CD4-positive, alpha-beta T cell (primary cell): ENCODE measurements at regions of chr2 and their contacts with region 1.

Region 1: DNA sequence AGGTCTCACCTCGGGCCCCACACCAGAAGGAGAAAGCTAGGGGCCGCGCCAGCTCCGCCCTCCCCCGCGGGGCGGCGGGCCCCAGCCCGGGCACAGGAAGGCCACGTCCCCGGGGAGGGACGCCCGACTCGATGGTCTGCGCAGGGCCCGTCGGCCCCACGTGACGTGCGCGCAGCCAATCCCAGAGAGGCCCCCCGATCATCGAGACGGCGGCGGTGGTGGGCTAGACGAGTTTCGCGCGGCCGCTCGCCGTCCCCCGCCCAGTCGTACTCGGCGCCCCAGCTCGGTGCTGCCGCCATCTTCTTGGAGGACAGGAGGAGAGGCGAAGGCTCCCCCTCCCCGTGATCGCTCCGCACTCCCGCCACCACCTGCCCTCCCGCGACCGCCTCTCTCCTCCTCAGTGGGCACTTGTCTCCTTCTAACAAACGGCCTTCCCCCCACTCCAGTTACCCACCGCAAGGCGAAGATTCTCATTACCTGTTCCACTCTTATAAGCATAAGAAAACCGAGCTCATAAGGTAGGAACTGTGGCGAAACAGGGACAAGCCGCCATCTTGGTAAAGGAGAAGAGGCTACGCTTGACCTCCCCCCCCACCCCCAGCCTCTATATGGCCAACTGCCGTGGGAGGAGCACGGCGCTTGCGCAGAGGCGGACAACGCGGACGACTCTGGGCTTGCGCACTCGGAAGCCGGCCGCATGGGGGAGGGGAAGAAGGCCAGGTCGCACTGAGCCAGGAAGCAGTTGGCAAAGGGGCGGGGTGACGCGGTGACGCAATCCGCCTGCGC is at the start of gene HDLBP:
- DNase-seq: peak; percentile 100
- ATAC-seq: peak; percentile 71
- H3K4me3 ChIP-seq: peak within 1 kb of the TSS; percentile 88
- H3K4me3 Mint-ChIP-seq: peak within 1 kb of the TSS; percentile 98
- H3K27ac ChIP-seq: peak within 1 kb of the TSS; percentile 96 to 98
- H3K27ac Mint-ChIP-seq: peak within 1 kb of the TSS; percentile 97
- H3K4me1 ChIP-seq: peaks cover 58% of the 10 kb centered on the region
- H3K4me1 Mint-ChIP-seq: peaks cover 83% of the 10 kb centered on the region
- H3K27me3 ChIP-seq: no peaks in the 10 kb centered on the region
- H3K27me3 Mint-ChIP-seq: no peaks in the 10 kb centered on the region
- CTCF ChIP-seq: peak; percentile 33
- total RNA-seq, gene HDLBP: 82.0 to 97.9 TPM

Region 2: DNA sequence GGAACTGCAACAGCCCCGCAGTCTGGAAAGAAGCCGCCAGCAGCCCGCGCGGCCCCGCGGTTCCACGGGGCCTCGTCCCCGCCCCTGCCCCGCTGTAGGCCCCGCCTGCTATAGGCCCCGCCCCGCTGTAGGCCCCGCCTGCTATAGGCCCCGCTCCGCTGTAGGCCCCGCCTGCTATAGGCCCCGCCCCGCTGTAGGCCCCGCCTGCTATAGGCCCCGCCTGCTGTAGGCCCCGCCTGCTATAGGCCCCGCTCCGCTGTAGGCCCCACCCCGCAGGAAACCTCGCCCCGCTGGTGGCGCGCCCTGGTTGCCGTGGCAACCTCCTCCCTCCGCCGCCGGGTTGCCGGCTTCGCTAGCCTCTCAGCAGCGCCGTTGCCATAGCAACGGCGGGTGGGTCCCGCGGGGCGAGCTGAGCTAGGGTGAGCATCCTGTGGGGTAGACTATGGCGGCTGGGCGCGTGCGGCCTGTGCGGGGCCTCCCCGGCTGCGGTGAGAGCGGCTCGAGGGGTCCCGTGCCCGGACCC is 483.0 kb before region 1 on chr2:
- CTCF ChIA-PET with region 1: no interaction called
- POLR2A ChIA-PET with region 1: no interaction called
- intact Hi-C with region 1: loop called in 1 of 2 experiments (anchors 5 kb)
- DNase-seq: peak; percentile 98 to 100 (median 99)
- ATAC-seq: peak; percentile 91
- H3K4me3 ChIP-seq: peak overlapping the region; percentile 43
- H3K4me3 Mint-ChIP-seq: peak overlapping the region; percentile 38
- H3K27ac ChIP-seq: no peak overlapping the region
- H3K27ac Mint-ChIP-seq: no peak overlapping the region
- H3K4me1 ChIP-seq: peaks cover 14% of the 10 kb centered on the region
- H3K4me1 Mint-ChIP-seq: no peaks in the 10 kb centered on the region
- H3K27me3 ChIP-seq: peaks cover 17 to 26% of the 10 kb centered on the region in 2 experiments
- H3K27me3 Mint-ChIP-seq: peaks cover 36% of the 10 kb centered on the region
- CTCF ChIP-seq: no peak

Region 3: DNA sequence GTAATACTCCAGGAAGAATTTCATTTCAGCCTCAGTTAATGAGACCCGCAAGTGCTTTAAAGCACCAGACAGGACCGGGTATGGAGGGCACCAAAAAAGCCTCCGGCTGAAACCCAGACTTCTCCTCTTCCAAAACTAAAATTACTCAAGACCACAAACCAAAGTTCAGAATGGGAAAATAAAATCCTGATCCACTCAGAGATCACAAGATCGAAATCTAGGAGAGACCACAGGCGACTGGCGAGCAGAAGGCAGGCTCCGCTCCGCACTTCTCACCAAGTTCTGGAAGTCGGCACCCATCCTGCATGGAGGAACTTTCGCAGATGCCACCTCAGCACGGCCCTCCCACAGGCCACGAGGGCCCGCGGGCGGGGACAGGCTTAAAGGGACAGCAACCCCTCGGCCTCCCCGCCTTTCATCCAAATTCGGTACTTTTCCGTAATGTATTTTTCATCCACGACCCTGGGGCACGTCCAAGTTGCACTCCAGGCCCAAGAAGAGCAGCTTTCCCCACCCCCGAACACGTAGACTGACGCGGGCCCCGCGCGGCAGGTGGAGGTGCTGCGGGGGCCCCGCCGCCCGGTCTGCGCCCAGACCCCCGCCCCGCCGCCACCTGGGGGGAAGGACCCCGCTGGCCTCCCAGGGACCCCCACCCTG is 43.5 kb before region 1 on chr2:
- CTCF ChIA-PET with region 1: no interaction called
- POLR2A ChIA-PET with region 1: interaction called, 14 read pairs
- intact Hi-C with region 1: loop called (anchors 2 to 5 kb)
- DNase-seq: peak; percentile 26 to 78 (median 51)
- ATAC-seq: peak; percentile 73
- H3K4me3 ChIP-seq: peak overlapping the region; percentile 72
- H3K4me3 Mint-ChIP-seq: peak overlapping the region; percentile 96
- H3K27ac ChIP-seq: no peak overlapping the region
- H3K27ac Mint-ChIP-seq: peak overlapping the region; percentile 84
- H3K4me1 ChIP-seq: peaks cover 36% of the 10 kb centered on the region
- H3K4me1 Mint-ChIP-seq: peaks cover 60% of the 10 kb centered on the region
- H3K27me3 ChIP-seq: no peaks in the 10 kb centered on the region
- H3K27me3 Mint-ChIP-seq: no peaks in the 10 kb centered on the region
- CTCF ChIP-seq: no peak

Region 4: GRCh38 chr2:241355983-241356870 is 40.9 kb after region 1 on chr2 and contains the start of gene FARP2:
- CTCF ChIA-PET with region 1: interaction called, 3 read pairs
- POLR2A ChIA-PET with region 1: interaction called, 3 read pairs
- intact Hi-C with region 1: loop called (anchors 1 to 2 kb)
- DNase-seq: peak; percentile 95 to 100 (median 97)
- ATAC-seq: peak; percentile 94
- H3K4me3 ChIP-seq: peak within 1 kb of the TSS; percentile 55
- H3K4me3 Mint-ChIP-seq: peak within 1 kb of the TSS; percentile 86
- H3K27ac ChIP-seq: peak within 1 kb of the TSS in 1 of 2 donors; percentile 20
- H3K27ac Mint-ChIP-seq: peak within 1 kb of the TSS; percentile 77
- H3K4me1 ChIP-seq: peaks cover 20% of the 10 kb centered on the region
- H3K4me1 Mint-ChIP-seq: peaks cover 28% of the 10 kb centered on the region
- H3K27me3 ChIP-seq: no peaks in the 10 kb centered on the region
- H3K27me3 Mint-ChIP-seq: no peaks in the 10 kb centered on the region
- CTCF ChIP-seq: no peak
- total RNA-seq, gene FARP2: 17.2 to 18.3 TPM

Region 5: DNA sequence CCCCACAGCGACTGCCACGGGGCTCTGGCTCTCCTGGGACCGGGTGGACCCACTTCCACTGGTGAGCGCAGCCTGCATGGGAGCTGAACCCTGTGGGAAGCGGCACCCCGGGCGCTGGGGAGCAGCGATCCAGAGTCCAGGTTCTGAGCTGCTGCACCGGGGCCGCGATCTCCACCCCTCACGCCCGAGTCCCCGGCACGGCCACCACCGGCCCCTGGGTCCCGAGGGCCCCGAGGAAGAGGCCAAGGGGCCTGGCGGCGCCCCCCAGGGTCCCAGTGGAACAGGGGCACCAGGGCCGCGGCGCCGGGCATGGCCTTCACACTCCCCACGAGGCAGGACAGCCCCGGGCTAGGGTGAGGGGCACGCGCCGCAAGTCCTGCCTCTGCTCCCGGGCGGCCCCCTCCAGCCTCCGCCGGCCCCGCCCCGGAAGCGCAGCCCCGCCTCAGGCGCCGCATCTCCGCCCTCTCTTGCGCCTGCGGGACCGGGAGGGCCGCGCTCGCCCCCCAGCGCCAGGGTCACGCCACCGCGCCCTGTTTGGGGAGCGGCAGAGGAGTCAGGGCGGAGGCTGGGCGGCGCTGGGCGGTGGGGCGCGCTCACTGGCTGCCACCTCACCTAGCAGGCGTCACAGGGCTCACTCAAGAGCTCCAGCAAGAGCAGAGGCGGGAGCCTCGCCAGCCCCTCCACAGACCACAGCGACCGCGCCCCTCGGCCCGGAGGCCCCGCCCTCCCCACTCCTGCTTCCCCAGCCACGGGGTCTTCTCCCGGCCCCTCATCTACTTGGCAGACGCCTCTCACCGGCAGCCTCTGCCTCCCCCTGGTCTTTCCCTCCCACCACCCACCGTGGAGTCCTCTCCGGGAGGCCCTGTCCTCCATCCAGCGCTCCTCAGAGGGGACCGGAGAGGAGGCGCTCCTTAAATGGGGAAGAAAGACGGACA is 294.8 kb after region 1 on chr2:
- CTCF ChIA-PET with region 1: no interaction called
- POLR2A ChIA-PET with region 1: no interaction called
- intact Hi-C with region 1: loop called in 1 of 2 experiments (anchors 5 kb)
- DNase-seq: peak; percentile 82 to 96 (median 89)
- ATAC-seq: peak; percentile 99
- H3K4me3 ChIP-seq: peak overlapping the region; percentile 49
- H3K4me3 Mint-ChIP-seq: peak overlapping the region; percentile 45
- H3K27ac ChIP-seq: no peak overlapping the region
- H3K27ac Mint-ChIP-seq: peak overlapping the region; percentile 77
- H3K4me1 ChIP-seq: peaks cover 24% of the 10 kb centered on the region
- H3K4me1 Mint-ChIP-seq: peaks cover 25% of the 10 kb centered on the region
- H3K27me3 ChIP-seq: no peaks in the 10 kb centered on the region
- H3K27me3 Mint-ChIP-seq: no peaks in the 10 kb centered on the region
- CTCF ChIP-seq: peak; percentile 65

Region 6: GRCh38 chr2:241686649-241687425 is 371.6 kb after region 1 on chr2 and contains the start of gene DTYMK:
- CTCF ChIA-PET with region 1: no interaction called
- POLR2A ChIA-PET with region 1: interaction called, 13 read pairs
- intact Hi-C with region 1: loop called in 1 of 2 experiments (anchors 2 kb)
- DNase-seq: peak; percentile 89 to 98 (median 95)
- ATAC-seq: peak; percentile 90
- H3K4me3 ChIP-seq: peak within 1 kb of the TSS; percentile 84
- H3K4me3 Mint-ChIP-seq: peak within 1 kb of the TSS; percentile 95
- H3K27ac ChIP-seq: peak within 1 kb of the TSS; percentile 60 to 85
- H3K27ac Mint-ChIP-seq: peak within 1 kb of the TSS; percentile 84
- H3K4me1 ChIP-seq: peaks cover 37% of the 10 kb centered on the region
- H3K4me1 Mint-ChIP-seq: peaks cover 38% of the 10 kb centered on the region
- H3K27me3 ChIP-seq: no peaks in the 10 kb centered on the region
- H3K27me3 Mint-ChIP-seq: no peaks in the 10 kb centered on the region
- CTCF ChIP-seq: no peak
- total RNA-seq, gene DTYMK: 4.8 to 6.0 TPM